GM13976 (cell line): ENCODE measurements at regions of chrX and their contacts with region 1.

Region 1: DNA sequence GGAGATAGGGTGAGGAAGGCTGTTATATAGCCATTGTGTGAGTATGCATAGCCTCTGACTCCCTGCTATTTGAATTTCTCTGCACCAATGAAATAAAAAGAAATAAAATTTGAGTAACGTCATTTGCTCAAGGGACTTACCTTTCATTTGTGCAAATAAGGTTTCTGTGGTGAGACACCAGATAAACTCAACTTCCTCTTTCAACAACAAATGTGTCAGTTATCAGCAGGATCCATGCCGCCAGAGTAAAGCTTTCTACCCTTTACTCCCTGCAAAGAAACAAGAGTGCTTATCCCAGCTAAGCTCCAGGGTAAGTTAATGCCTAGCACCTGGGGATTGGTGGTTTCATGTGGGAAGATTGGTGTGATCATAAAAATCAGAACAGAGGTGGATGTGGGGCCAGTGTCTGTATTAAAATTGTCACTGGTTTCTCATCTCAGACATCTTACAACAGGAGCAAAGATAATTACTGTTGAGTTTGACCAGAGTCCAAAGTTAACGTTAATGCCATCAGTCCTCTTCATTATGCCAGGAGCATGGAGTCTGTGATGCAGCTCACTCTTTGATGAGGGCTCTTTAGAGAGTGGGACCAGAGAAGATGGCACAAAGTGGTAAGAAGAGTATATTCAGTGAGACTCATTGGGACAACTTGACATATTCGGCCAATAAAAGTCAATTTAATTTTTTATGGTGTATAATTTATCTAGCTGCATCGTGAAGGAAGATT is at the start of gene P2RY10:
- DNase-seq: peak; percentile 28
- CTCF ChIP-seq: no peak

Region 2: GRCh38 chrX:79153348-79153747 is 208.0 kb after region 1 on chrX:
- in situ Hi-C with region 1: loop called (anchors 10 kb)
- DNase-seq: no peak
- CTCF ChIP-seq: no peak

Region 3: DNA sequence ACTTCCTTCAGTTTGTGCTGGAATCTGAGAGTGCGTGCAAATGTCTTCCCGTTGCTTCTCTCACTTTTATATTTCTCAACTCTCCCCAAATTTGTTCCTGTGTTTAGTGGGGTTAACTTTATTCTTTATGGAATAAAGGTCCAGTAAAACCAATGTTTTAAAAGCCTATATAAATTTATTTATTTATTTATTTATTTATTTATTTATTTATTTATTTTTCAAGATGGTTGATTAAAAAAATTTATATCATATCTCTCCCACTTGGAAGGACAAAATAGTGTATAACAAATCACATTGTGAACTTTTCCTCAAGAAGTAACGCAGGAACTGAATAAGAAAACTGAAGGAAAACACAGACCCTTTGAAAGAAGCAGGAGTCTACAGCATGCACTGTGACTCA is 517.1 kb after region 1 on chrX:
- in situ Hi-C with region 1: no loop called
- DNase-seq: no peak
- CTCF ChIP-seq: no peak